Activated CD4-positive, alpha-beta T cell treated with anti-CD3 and anti-CD28 coated beads, Interleukin-2, amount 10 ng/mL, durations not matched to agents 24 days and 14 days (primary cell): ENCODE measurements at regions of chr20 and their contacts with region 1.

Region 1: GRCh38 chr20:5844063-5844681 is 94.0 kb downstream of the SHLD1 start:
- DNase-seq: peak; percentile 84
- H3K4me3 Mint-ChIP-seq: peak overlapping the region; percentile 65
- H3K27ac Mint-ChIP-seq: peak overlapping the region; percentile 93
- H3K4me1 Mint-ChIP-seq: peaks cover 39% of the 10 kb centered on the region
- H3K27me3 Mint-ChIP-seq: peaks cover 2% of the 10 kb centered on the region

Region 2: GRCh38 chr20:5353624-5354496 is 490.3 kb before region 1 on chr20:
- intact Hi-C with region 1: loop called (anchors 10 kb)
- DNase-seq: no peak
- H3K4me3 Mint-ChIP-seq: no peak overlapping the region
- H3K27ac Mint-ChIP-seq: peak overlapping the region; percentile 59
- H3K4me1 Mint-ChIP-seq: peaks cover 16% of the 10 kb centered on the region
- H3K27me3 Mint-ChIP-seq: no peaks in the 10 kb centered on the region

Region 3: GRCh38 chr20:5674176-5674660 is 170.0 kb before region 1 on chr20:
- intact Hi-C with region 1: loop called (anchors 1 kb)
- DNase-seq: peak; percentile 58
- H3K4me3 Mint-ChIP-seq: peak overlapping the region; percentile 19
- H3K27ac Mint-ChIP-seq: peak overlapping the region; percentile 79
- H3K4me1 Mint-ChIP-seq: peaks cover 7% of the 10 kb centered on the region
- H3K27me3 Mint-ChIP-seq: no peaks in the 10 kb centered on the region

Region 4: DNA sequence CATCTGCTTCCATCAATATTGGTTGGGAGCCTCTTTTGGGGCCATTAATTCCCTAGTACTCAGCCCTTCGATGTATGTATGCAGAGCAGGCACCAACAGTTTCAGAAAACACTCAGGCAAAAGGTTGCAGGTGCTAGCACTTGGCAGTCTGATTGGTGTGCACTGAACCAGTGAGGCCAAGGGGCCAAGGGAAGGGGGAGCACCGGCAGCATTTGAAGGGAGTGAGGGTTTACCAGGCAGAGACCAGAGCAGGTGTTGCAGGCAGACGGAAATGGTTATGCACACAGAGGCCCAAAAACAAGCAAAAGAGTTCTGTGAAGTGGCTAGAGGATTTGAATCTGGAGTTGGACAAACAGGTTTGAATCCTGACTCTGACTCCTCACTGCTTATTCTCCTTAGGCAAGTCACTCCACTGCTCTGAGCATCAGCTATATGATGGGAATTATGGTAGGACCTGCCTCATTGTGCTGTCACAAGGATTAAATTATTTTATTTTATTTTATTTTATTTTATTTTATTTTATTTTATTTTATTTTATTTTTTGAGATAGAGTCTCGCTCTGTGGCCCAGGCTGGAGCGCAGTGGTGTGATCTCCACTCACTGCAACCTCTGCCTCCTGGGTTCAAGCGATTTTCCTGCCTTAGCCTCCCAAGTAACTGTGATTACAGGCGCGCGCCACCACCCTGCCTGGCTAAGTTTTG is 152.1 kb before region 1 on chr20:
- intact Hi-C with region 1: no loop called
- DNase-seq: no peak
- H3K4me3 Mint-ChIP-seq: no peak overlapping the region
- H3K27ac Mint-ChIP-seq: no peak overlapping the region
- H3K4me1 Mint-ChIP-seq: no peaks in the 10 kb centered on the region
- H3K27me3 Mint-ChIP-seq: no peaks in the 10 kb centered on the region

Region 5: GRCh38 chr20:5918856-5919625 is 74.9 kb after region 1 on chr20:
- intact Hi-C with region 1: loop called (anchors 2 kb)
- DNase-seq: peak; percentile 66
- H3K4me3 Mint-ChIP-seq: no peak overlapping the region
- H3K27ac Mint-ChIP-seq: peak overlapping the region; percentile 60
- H3K4me1 Mint-ChIP-seq: peaks cover 15% of the 10 kb centered on the region
- H3K27me3 Mint-ChIP-seq: peaks cover 17% of the 10 kb centered on the region